Activated T-helper 2 cell treated with anti-CD3 and anti-CD28 coated beads, Interferon-gamma antibody, Interleukin-2, Interleukin-4, amounts not matched to agents 10 μg/mL and 5 μg/mL and 100 μg/mL, durations not matched to agents 14 hours and 24 hours and 36 hours (primary cell): ENCODE measurements at regions of chr12 and their contacts with region 1.

Region 1: GRCh38 chr12:116277393-116278278 is at the start of gene MED13L:
- DNase-seq: peak; percentile 85
- H3K4me3 Mint-ChIP-seq: peak within 1 kb of the TSS; percentile 91
- H3K27ac Mint-ChIP-seq: peak within 1 kb of the TSS; percentile 91
- H3K4me1 Mint-ChIP-seq: peaks cover 44% of the 10 kb centered on the region
- H3K27me3 Mint-ChIP-seq: peaks cover 6% of the 10 kb centered on the region
- total RNA-seq, gene MED13L: 49.0 and 52.5 TPM in 2 replicates

Region 2: GRCh38 chr12:116066381-116067230 is 211.0 kb before region 1 on chr12:
- intact Hi-C with region 1: loop called (anchors 5 kb)
- DNase-seq: peak; percentile 40
- H3K4me3 Mint-ChIP-seq: no peak overlapping the region
- H3K27ac Mint-ChIP-seq: no peak overlapping the region
- H3K4me1 Mint-ChIP-seq: peaks cover 17% of the 10 kb centered on the region
- H3K27me3 Mint-ChIP-seq: no peaks in the 10 kb centered on the region

Region 3: DNA sequence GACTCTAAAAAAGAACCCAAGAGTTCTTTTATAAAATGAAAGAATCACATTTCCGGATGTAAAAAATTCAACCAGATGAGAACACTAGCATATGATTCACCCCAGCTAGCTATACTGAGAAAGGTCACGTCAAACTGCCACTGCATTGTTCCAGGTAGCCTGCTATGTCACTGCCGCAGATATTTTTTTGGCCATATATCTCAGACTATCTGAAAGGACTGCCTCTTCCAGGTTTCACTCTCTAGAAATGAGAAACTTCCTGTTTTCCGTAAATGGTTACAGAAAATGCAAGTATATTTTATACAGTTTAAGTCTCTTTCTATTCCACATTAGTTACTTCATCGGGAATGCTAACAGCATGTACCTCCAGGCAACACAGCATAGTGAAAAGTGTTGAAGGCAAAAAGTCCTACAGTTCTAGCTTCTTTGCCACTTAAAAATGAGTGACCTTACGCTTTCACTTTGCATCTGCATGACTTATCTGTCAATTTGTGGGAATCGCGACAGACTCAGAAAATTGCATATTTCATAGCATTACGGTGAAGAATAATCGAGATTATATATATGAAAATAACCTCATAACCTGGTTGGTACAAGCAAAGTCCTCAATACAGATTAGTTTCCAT is 105.3 kb before region 1 on chr12:
- intact Hi-C with region 1: loop called (anchors 10 kb)
- DNase-seq: peak; percentile 41
- H3K4me3 Mint-ChIP-seq: peak overlapping the region; percentile 83
- H3K27ac Mint-ChIP-seq: peak overlapping the region; percentile 97
- H3K4me1 Mint-ChIP-seq: peaks cover 49% of the 10 kb centered on the region
- H3K27me3 Mint-ChIP-seq: no peaks in the 10 kb centered on the region

Region 4: GRCh38 chr12:116325336-116325664 is 47.7 kb after region 1 on chr12:
- intact Hi-C with region 1: loop called (anchors 2 kb)
- DNase-seq: peak; percentile 23
- H3K4me3 Mint-ChIP-seq: no peak overlapping the region
- H3K27ac Mint-ChIP-seq: peak overlapping the region; percentile 40
- H3K4me1 Mint-ChIP-seq: peaks cover 28% of the 10 kb centered on the region
- H3K27me3 Mint-ChIP-seq: no peaks in the 10 kb centered on the region

Region 5: GRCh38 chr12:116539905-116540482 is 262.4 kb after region 1 on chr12:
- intact Hi-C with region 1: loop called (anchors 5 kb)
- DNase-seq: no peak
- H3K4me3 Mint-ChIP-seq: no peak overlapping the region
- H3K27ac Mint-ChIP-seq: no peak overlapping the region
- H3K4me1 Mint-ChIP-seq: peaks cover 33% of the 10 kb centered on the region
- H3K27me3 Mint-ChIP-seq: no peaks in the 10 kb centered on the region

Region 6: DNA sequence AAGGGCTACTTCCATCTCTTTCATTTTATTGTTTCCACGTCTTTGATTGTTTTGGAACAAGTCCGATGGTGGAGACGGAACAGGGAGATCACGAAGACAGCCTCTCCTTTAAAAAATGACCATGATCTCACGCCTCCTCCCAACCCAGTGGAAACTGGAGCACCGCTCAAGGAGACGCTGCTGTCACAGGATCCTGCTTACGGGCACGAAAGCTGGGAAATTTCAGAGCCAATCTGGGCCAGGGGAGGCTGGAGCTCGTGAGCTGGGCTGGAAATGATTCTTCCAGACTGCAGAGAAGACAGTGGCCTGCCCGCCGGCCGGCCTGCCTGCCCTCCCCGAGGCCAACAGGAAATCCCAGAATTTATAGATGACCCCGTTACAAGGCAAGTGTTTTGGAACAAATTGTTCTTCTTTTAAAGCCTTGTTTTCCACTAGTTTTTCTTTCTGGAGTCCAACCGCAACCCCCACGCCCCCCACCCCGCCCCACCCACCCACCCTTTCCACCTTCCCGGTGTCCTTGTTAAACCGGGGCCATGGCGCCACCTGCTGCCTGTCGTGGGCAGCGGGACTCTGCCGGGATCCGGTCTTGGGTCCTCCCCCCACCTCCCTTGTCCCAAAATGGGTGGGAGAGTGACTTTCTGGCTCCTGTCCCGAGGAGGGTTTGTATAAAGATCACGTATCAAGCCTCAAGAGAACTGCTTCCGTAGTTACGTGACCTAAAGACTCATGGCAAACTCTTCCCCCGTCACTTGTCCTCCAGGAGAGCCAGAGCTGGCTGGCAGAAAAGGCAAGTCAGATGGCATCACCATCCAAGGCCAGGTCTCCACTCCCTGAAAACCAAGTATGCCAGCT is 321.9 kb after region 1 on chr12:
- intact Hi-C with region 1: loop called (anchors 5 kb)
- DNase-seq: peak; percentile 30
- H3K4me3 Mint-ChIP-seq: no peak overlapping the region
- H3K27ac Mint-ChIP-seq: no peak overlapping the region
- H3K4me1 Mint-ChIP-seq: peaks cover 26% of the 10 kb centered on the region
- H3K27me3 Mint-ChIP-seq: no peaks in the 10 kb centered on the region